ENCODE measurements at regions of chr4 and their contacts with region 1.

Region 1: DNA sequence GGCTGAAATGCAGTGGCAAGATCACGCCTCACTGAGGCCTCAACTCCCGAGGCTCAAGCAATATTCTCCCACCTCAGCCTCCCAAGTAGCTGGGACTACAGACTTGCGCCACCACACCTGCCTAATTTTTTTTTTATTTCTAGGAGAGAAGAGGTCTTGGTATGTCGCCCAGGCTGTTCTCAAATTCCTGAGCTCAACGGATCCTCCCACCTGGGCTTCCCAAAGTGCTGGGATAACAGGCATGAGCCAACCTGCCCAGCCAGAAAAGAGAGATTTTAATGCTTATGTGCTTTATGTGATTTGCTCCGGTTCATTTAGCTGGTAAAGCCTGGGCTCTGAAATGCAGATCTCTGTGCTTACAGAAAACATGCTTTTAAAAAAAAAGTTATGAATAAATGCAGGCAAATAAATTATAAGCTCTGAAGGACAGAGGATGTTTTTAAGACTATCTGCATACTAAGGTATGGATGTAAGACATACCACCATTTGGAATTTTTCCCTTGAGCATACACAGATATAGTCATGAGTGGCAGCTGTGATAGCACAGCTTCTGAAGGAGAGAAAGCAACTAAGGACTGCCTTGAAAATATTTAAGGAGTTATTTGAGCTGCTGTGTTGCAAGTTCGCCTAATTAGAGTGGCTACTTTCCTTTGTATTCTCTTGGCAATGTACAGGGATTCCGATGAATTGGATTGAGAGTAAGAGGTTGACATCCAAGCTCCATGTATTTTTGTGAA is 13.8 kb downstream of the GUCY1B1 start:
- DNase-seq: no peak
- H3K4me3 ChIP-seq: no peak overlapping the region
- H3K27ac ChIP-seq: no peak overlapping the region
- H3K4me1 ChIP-seq: no peaks in the 10 kb centered on the region
- H3K27me3 ChIP-seq: no peaks in the 10 kb centered on the region
- CTCF ChIP-seq: no peak
- POLR2A ChIP-seq: no peak

Region 2: DNA sequence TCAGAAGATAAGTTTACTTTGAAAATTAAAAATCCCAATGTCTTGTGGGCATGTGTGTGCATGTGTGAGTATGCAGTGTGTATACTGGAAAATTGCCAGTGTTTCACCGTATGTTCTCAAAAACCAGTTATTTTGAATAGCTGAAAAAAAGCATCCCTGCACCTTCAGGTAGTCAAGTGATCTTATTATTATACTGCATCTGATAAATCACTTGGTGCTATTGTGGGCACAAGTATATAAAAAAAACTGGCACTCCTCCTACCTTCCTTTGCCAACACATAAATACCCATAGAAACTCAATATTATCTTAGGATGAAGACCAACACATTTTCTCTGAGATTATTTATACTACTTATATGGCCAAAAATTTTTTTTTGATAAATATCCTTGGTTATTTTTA is 304.3 kb before region 1 on chr4:
- intact Hi-C with region 1: loop called (anchors 5 kb)
- DNase-seq: no peak
- H3K4me3 ChIP-seq: no peak overlapping the region
- H3K27ac ChIP-seq: no peak overlapping the region
- H3K4me1 ChIP-seq: no peaks in the 10 kb centered on the region
- H3K27me3 ChIP-seq: no peaks in the 10 kb centered on the region
- CTCF ChIP-seq: no peak
- POLR2A ChIP-seq: no peak

Region 3: GRCh38 chr4:155822572-155822971 is 49.9 kb after region 1 on chr4:
- intact Hi-C with region 1: no loop called
- DNase-seq: no peak
- H3K4me3 ChIP-seq: no peak overlapping the region
- H3K27ac ChIP-seq: no peak overlapping the region
- H3K4me1 ChIP-seq: no peaks in the 10 kb centered on the region
- H3K27me3 ChIP-seq: no peaks in the 10 kb centered on the region
- CTCF ChIP-seq: no peak
- POLR2A ChIP-seq: no peak